RWPE1 (cell line): ENCODE measurements at regions of chr19 and their contacts with region 1.

Region 1: DNA sequence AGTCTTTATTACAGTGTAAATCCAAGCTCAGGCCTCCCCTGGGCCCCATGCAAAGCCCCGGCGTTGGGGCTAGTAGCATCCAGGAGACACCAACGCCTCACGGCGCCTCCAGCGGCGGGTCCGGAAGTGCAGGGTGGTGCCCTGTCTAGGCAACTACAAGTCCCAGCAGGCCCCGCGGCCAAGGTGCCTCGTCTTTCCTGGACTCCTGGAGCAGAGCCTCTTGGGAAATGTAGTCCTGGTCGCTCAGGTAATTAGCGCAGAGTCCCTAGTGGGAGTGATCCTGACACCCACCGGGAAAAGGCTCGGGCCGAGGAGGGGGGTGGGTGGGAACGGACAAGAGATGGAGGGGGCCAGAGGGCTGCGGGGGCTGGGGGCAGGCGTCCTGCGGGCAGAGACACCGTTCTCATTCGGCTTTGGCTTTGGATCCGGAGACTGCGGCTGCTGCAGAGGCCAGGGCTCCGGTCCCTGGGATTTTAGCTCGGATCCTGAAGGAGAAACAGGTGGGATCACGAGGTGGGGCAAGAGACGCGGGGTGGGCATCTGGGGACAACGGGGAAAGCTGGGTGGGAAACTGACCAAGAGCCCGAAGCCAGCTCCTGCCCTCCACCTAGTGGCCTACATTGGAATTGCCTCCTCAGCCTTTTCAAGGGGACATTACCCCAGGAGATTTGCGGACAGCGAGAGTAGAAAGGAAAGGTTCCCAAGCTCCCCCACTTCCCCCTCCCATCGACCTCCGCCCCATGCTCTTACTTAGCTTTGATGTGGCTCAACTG is 11.4 kb downstream of the RTN2 start:
- DNase-seq: peak; percentile 80
- H3K27ac ChIP-seq: peak overlapping the region; percentile 86
- CTCF ChIP-seq: peak; percentile 89

Region 2: DNA sequence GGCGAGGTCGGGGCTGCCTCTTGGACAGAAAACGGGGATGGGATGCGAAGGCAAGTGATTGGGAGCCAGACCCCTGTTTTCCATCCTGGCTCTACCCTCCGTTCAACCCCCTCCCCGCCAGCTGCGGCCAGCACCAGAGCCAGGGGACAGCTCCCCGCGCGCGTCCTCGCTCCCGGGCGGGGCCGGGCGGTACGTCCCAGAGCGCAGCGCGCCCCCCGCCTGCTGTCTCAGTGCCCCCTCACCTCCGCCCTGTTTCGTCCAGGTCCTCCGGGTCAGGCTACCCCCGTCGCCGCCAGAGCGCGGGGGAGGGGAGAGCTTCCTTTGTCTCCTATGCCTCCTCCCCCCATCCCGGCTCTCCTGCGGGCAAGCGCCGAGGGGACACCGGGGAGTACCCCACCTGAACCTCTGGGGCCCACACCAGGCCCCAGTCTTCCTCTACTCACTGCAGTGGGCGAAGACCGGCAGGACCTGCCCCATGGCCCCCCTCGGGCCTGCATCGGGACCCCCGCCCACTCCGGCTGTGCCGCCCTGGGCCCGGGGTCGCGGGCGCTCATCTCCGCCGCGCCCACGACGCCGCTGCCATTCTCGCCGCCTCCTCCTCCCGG is 11.0 kb after region 1 on chr19:
- CTCF ChIA-PET with region 1: interaction called, 15 read pairs
- POLR2A ChIA-PET with region 1: no interaction called
- DNase-seq: no peak
- H3K27ac ChIP-seq: peak overlapping the region; percentile 64
- CTCF ChIP-seq: no peak

Region 3: DNA sequence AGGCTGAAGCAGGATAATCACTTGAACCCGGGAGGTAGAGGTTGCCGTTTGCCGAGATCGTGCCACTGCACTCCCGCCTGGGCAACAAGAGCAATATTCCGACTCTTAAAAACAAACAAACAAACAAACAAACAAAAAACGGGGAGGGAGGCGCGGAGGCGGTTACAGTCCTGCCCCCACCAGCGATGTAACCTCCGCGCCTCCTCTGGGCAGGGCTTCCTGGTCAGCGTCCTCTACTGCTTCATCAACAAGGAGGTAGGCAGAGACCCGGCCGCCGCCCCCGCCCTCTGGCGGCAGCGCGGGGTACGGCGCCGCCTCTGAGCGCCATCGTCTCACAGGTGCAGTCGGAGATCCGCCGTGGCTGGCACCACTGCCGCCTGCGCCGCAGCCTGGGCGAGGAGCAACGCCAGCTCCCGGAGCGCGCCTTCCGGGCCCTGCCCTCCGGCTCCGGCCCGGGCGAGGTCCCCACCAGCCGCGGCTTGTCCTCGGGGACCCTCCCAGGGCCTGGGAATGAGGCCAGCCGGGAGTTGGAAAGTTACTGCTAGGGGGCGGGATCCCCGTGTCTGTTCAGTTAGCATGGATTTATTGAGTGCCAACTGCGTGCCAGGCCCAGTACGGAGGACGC is 196.0 kb after region 1 on chr19:
- CTCF ChIA-PET with region 1: no interaction called
- POLR2A ChIA-PET with region 1: no interaction called
- DNase-seq: peak; percentile 82
- H3K27ac ChIP-seq: peak overlapping the region; percentile 97
- CTCF ChIP-seq: peak; percentile 98